CD8-positive, alpha-beta T cell (primary cell): ENCODE measurements at regions of chr6 and their contacts with region 1.

Region 1: GRCh38 chr6:31652925-31653718 is 661 bp upstream of the BAG6 start:
- DNase-seq: peak in 4 of 9 experiments; percentile 77 to 92 (median 88)
- ATAC-seq: peak; percentile 70
- H3K4me3 ChIP-seq: peak overlapping the region; percentile 78 to 82
- H3K4me3 Mint-ChIP-seq: peak overlapping the region; percentile 92
- H3K27ac ChIP-seq: peak overlapping the region; percentile 94 to 96
- H3K27ac Mint-ChIP-seq: peak overlapping the region; percentile 100
- H3K4me1 ChIP-seq: peaks cover 32% of the 10 kb centered on the region
- H3K4me1 Mint-ChIP-seq: peaks cover 59% of the 10 kb centered on the region
- H3K27me3 ChIP-seq: no peaks in the 10 kb centered on the region
- H3K27me3 Mint-ChIP-seq: no peaks in the 10 kb centered on the region
- CTCF ChIP-seq: no peak

Region 2: DNA sequence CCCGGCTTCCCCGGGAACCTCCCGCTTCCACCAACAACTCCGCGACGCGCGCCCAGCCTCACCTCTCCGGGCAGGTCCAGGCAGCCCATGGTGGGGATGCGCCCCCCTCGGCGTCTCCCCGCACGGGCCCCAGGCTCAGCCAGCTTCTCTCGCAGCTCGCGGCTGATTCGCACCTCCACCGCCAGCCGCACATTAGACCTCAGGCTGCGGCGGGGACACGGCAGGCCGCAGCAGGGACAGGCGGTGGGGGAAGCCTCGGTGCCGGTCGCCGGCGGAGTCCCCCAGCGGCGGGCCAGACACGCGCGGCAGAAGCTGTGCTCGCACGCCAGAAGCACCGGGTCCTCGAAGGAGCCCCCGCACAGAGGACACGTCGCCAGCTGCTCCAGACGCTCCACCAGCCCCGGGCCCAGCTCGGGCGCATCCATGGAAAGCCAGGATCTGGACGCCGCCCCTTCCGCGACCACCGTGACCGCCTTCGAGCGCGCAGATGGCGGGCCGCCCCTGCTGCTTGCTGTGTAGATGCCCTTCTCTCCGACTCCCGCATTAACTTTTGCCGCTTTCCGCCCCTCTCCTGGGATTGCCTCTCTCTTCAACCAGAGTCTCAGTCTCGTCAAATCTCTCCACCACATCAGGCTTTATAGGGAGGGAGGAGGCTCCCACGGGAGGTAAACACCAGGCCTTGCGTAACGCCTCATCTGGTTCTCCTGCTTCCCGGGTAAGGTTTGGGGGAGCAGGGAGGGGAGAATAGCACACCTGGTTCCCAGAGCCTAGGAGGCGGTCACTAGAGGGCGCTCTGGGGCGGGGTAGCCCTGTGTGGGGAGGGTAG is 1577.7 kb before region 1 on chr6 and contains the start of gene RNF39:
- CTCF ChIA-PET with region 1: no interaction called
- POLR2A ChIA-PET with region 1: no interaction called
- intact Hi-C with region 1: no loop called
- DNase-seq: peak in 2 of 9 experiments; percentile 39 to 46
- ATAC-seq: peak; percentile 50
- H3K4me3 ChIP-seq: peak within 1 kb of the TSS in 1 of 2 experiments; percentile 34
- H3K4me3 Mint-ChIP-seq: peak within 1 kb of the TSS; percentile 72
- H3K27ac ChIP-seq: no peak within 1 kb of the TSS
- H3K27ac Mint-ChIP-seq: no peak within 1 kb of the TSS
- H3K4me1 ChIP-seq: peaks cover 42% of the 10 kb centered on the region
- H3K4me1 Mint-ChIP-seq: peaks cover 41% of the 10 kb centered on the region
- H3K27me3 ChIP-seq: peaks cover 26 to 33% of the 10 kb centered on the region in 2 experiments
- H3K27me3 Mint-ChIP-seq: peaks cover 54% of the 10 kb centered on the region
- CTCF ChIP-seq: peak; percentile 25
- total RNA-seq, gene RNF39: not detected

Region 3: DNA sequence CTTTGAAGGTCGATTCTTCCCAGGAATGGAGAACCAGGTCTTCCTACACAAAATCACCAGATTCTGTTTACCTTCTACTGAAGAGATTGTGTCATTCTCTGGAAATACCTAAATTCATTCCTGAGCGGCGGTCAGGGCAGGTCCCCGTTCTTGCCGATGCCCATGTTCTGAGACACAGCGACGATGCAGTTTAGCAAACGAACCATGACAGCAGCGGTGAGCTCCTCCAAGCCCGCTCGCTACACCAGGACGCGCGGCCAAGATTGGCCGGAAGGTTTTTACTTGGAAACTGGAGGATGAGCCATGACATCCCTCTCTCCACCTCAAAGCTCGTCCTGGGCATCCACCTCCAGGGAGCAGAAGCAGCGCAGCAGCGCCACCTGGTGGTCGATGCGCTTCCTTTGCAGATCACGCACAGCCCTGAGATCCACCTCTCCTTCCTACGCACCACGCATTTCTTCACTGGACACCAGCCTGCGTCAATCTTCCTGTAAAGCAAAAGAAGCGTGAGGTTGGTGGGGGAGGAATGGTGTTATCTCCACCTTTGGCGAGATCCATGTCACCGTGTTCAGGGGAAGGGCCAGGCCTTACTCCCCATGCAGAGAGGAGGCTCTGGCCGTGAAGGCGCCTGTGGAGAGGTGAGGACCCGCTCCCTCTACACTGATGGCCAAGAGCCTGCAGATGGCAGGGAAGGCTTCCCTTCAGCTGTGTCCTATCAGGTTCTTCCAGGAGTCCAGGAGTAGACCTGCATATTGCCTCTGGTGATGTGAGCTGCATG is 286.2 kb before region 1 on chr6:
- CTCF ChIA-PET with region 1: no interaction called
- POLR2A ChIA-PET with region 1: no interaction called
- intact Hi-C with region 1: no loop called
- DNase-seq: peak; percentile 80 to 94 (median 90)
- ATAC-seq: peak; percentile 98
- H3K4me3 ChIP-seq: peak overlapping the region; percentile 54 to 57
- H3K4me3 Mint-ChIP-seq: peak overlapping the region; percentile 86
- H3K27ac ChIP-seq: peak overlapping the region in 1 of 2 experiments; percentile 31
- H3K27ac Mint-ChIP-seq: peak overlapping the region; percentile 82
- H3K4me1 ChIP-seq: peaks cover 3% of the 10 kb centered on the region
- H3K4me1 Mint-ChIP-seq: peaks cover 15% of the 10 kb centered on the region
- H3K27me3 ChIP-seq: no peaks in the 10 kb centered on the region
- H3K27me3 Mint-ChIP-seq: peaks cover 11% of the 10 kb centered on the region
- CTCF ChIP-seq: peak; percentile 94

Region 4: DNA sequence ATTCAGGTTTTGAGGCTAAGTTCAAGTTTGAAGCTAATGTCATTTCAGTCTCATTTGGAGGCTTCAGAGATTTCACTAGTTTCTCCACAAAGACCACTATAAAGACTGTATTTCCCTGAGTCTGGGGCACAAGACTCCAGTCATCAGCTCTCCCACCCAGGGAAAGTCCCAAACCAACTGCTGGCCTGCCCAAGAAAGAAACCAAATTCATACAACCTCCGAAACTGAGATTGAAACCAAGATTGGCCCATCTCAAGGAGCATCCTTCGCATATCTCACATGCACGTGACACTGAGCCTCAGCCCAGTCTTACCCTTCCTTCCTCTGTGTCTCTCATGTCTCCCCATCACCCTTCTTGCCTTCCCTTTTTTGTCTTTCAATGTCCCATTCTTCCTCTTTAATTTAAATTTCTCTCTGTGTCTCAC is 84.6 kb before region 1 on chr6:
- CTCF ChIA-PET with region 1: no interaction called
- POLR2A ChIA-PET with region 1: no interaction called
- intact Hi-C with region 1: no loop called
- DNase-seq: peak in 8 of 9 experiments; percentile 38 to 96 (median 66)
- ATAC-seq: peak; percentile 55
- H3K4me3 ChIP-seq: no peak overlapping the region
- H3K4me3 Mint-ChIP-seq: peak overlapping the region; percentile 44
- H3K27ac ChIP-seq: peak overlapping the region; percentile 11 to 90
- H3K27ac Mint-ChIP-seq: peak overlapping the region; percentile 93
- H3K4me1 ChIP-seq: peaks cover 60% of the 10 kb centered on the region
- H3K4me1 Mint-ChIP-seq: peaks cover 69% of the 10 kb centered on the region
- H3K27me3 ChIP-seq: no peaks in the 10 kb centered on the region
- H3K27me3 Mint-ChIP-seq: no peaks in the 10 kb centered on the region
- CTCF ChIP-seq: no peak

Region 5: GRCh38 chr6:31580807-31581433 is 72.2 kb before region 1 on chr6:
- CTCF ChIA-PET with region 1: interaction called, 4 read pairs
- POLR2A ChIA-PET with region 1: interaction called, 14 read pairs
- intact Hi-C with region 1: no loop called
- DNase-seq: peak; percentile 81 to 97 (median 90)
- ATAC-seq: peak; percentile 73
- H3K4me3 ChIP-seq: peak overlapping the region; percentile 92 to 100
- H3K4me3 Mint-ChIP-seq: peak overlapping the region; percentile 99
- H3K27ac ChIP-seq: peak overlapping the region; percentile 77 to 91
- H3K27ac Mint-ChIP-seq: peak overlapping the region; percentile 96
- H3K4me1 ChIP-seq: peaks cover 69% of the 10 kb centered on the region
- H3K4me1 Mint-ChIP-seq: peaks cover 77% of the 10 kb centered on the region
- H3K27me3 ChIP-seq: no peaks in the 10 kb centered on the region
- H3K27me3 Mint-ChIP-seq: no peaks in the 10 kb centered on the region
- CTCF ChIP-seq: peak; percentile 98

Region 6: GRCh38 chr6:31665501-31666336 is 12.6 kb after region 1 on chr6 and contains the start of gene CSNK2B:
- CTCF ChIA-PET with region 1: interaction called, 44 read pairs
- POLR2A ChIA-PET with region 1: interaction called, 130 read pairs
- intact Hi-C with region 1: loop called (anchors 1 kb)
- DNase-seq: peak; percentile 95 to 99 (median 98)
- ATAC-seq: peak; percentile 84
- H3K4me3 ChIP-seq: peak within 1 kb of the TSS; percentile 91 to 94
- H3K4me3 Mint-ChIP-seq: peak within 1 kb of the TSS; percentile 95
- H3K27ac ChIP-seq: peak within 1 kb of the TSS; percentile 96 to 99
- H3K27ac Mint-ChIP-seq: peak within 1 kb of the TSS; percentile 98
- H3K4me1 ChIP-seq: peaks cover 44% of the 10 kb centered on the region
- H3K4me1 Mint-ChIP-seq: peaks cover 56% of the 10 kb centered on the region
- H3K27me3 ChIP-seq: no peaks in the 10 kb centered on the region
- H3K27me3 Mint-ChIP-seq: no peaks in the 10 kb centered on the region
- CTCF ChIP-seq: no peak
- total RNA-seq, gene CSNK2B: 80.9 to 86.1 TPM

Region 7: GRCh38 chr6:31795616-31796298 is 142.6 kb after region 1 on chr6 and contains the start of gene VARS1:
- CTCF ChIA-PET with region 1: no interaction called
- POLR2A ChIA-PET with region 1: interaction called, 11 read pairs
- intact Hi-C with region 1: no loop called
- DNase-seq: peak; percentile 68 to 93 (median 83)
- ATAC-seq: peak; percentile 88
- H3K4me3 ChIP-seq: peak within 1 kb of the TSS; percentile 63 to 93
- H3K4me3 Mint-ChIP-seq: peak within 1 kb of the TSS; percentile 94
- H3K27ac ChIP-seq: peak within 1 kb of the TSS; percentile 74 to 83
- H3K27ac Mint-ChIP-seq: peak within 1 kb of the TSS; percentile 98
- H3K4me1 ChIP-seq: peaks cover 44% of the 10 kb centered on the region
- H3K4me1 Mint-ChIP-seq: peaks cover 44% of the 10 kb centered on the region
- H3K27me3 ChIP-seq: no peaks in the 10 kb centered on the region
- H3K27me3 Mint-ChIP-seq: no peaks in the 10 kb centered on the region
- CTCF ChIP-seq: peak; percentile 70
- total RNA-seq, gene VARS1: 29.8 to 33.3 TPM

Region 8: GRCh38 chr6:31806465-31807272 is 153.5 kb after region 1 on chr6 and contains the start of gene LSM2:
- CTCF ChIA-PET with region 1: interaction called, 3 read pairs
- POLR2A ChIA-PET with region 1: no interaction called
- intact Hi-C with region 1: loop called in 1 of 2 experiments (anchors 2 kb)
- DNase-seq: peak; percentile 92 to 99 (median 97)
- ATAC-seq: peak; percentile 99
- H3K4me3 ChIP-seq: peak within 1 kb of the TSS; percentile 61 to 95
- H3K4me3 Mint-ChIP-seq: peak within 1 kb of the TSS; percentile 87
- H3K27ac ChIP-seq: peak within 1 kb of the TSS; percentile 78 to 82
- H3K27ac Mint-ChIP-seq: peak within 1 kb of the TSS; percentile 94
- H3K4me1 ChIP-seq: peaks cover 8% of the 10 kb centered on the region
- H3K4me1 Mint-ChIP-seq: peaks cover 25% of the 10 kb centered on the region
- H3K27me3 ChIP-seq: no peaks in the 10 kb centered on the region
- H3K27me3 Mint-ChIP-seq: no peaks in the 10 kb centered on the region
- CTCF ChIP-seq: no peak
- total RNA-seq, gene LSM2: 19.6 to 26.4 TPM

Region 9: DNA sequence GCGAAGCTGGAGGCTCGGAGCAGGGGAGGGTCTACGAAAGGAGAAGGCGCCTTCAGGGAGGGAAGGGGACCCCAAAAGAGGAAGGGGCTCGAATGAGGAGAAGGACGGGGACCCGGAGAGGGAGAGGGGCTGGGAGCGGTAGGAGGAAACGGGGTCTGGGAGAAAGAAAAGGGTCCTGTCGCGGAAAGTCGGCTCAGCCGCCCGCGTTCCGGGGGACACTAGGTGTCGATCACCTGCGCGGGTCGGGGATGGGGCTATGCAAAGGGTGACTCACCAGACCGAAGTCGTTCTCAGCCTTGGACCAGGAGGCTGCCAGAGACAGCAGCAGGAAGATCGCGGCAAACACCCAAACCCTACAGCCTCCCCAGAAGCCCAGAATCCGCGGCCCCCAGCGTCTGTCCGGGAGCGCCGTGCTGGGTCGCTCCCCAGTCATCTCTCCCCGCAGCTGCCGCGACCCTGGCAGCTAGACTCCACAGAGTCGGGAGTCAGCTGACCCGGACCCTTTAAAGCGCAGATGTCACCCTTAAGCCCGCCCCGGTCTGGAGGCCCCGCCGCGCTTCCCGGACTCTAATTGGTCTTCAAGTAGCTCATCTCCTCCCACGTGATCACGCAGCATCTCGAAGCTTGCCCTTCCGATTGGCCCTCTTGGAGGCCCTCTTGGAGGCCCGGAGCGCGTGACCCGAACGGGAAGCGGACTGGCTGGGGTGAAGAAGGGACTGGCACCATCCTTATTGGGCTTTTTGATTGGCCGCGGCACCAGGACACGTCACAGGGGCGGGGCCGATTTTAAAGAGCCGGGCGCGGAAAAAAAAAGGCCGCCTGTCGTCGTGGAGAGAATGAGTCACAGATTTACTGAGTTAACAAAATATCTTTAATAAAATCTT is 209.5 kb after region 1 on chr6 and contains the start of gene NEU1:
- CTCF ChIA-PET with region 1: no interaction called
- POLR2A ChIA-PET with region 1: interaction called, 12 read pairs
- intact Hi-C with region 1: loop called in 1 of 2 experiments (anchors 1 kb)
- DNase-seq: peak; percentile 97 to 100 (median 98)
- ATAC-seq: peak; percentile 91
- H3K4me3 ChIP-seq: peak within 1 kb of the TSS; percentile 75 to 94
- H3K4me3 Mint-ChIP-seq: peak within 1 kb of the TSS; percentile 95
- H3K27ac ChIP-seq: peak within 1 kb of the TSS; percentile 77 to 97
- H3K27ac Mint-ChIP-seq: peak within 1 kb of the TSS; percentile 98
- H3K4me1 ChIP-seq: peaks cover 17% of the 10 kb centered on the region
- H3K4me1 Mint-ChIP-seq: peaks cover 23% of the 10 kb centered on the region
- H3K27me3 ChIP-seq: no peaks in the 10 kb centered on the region
- H3K27me3 Mint-ChIP-seq: no peaks in the 10 kb centered on the region
- CTCF ChIP-seq: no peak
- total RNA-seq, gene NEU1: 30.0 to 30.2 TPM

Region 10: DNA sequence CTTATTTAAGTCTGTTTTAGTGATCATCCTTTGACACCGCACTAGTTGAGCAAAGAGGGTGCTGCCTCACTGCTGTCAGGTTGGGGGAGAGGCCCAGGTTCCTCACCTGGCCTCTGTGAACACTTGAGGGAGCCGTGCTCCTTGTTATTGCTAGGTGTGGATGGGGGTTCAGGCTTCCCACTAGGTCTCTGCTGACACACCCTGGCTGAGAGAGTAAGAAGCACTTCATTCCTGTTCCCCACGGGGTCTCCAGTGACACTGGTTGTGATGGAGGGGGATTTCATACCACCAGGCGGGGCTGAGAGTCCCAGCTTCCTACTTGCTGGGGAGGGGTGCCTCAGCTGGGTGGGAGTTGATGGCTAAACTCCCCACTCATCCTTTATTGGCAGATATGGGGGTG is 581.8 kb after region 1 on chr6:
- CTCF ChIA-PET with region 1: no interaction called
- POLR2A ChIA-PET with region 1: no interaction called
- intact Hi-C with region 1: no loop called
- DNase-seq: peak in 2 of 9 experiments; percentile 21 to 40
- ATAC-seq: no peak
- H3K4me3 ChIP-seq: no peak overlapping the region
- H3K4me3 Mint-ChIP-seq: no peak overlapping the region
- H3K27ac ChIP-seq: no peak overlapping the region
- H3K27ac Mint-ChIP-seq: no peak overlapping the region
- H3K4me1 ChIP-seq: no peaks in the 10 kb centered on the region
- H3K4me1 Mint-ChIP-seq: peaks cover 2% of the 10 kb centered on the region
- H3K27me3 ChIP-seq: no peaks in the 10 kb centered on the region
- H3K27me3 Mint-ChIP-seq: no peaks in the 10 kb centered on the region
- CTCF ChIP-seq: no peak